MCF 10A (cell line): ENCODE measurements at regions of chr20 and their contacts with region 1.

Region 1: GRCh38 chr20:50504231-50504823 is 5.9 kb upstream of the PTPN1 start:
- DNase-seq: no peak
- H3K4me3 Mint-ChIP-seq: no peak overlapping the region
- H3K27ac Mint-ChIP-seq: peak overlapping the region; percentile 88
- H3K4me1 Mint-ChIP-seq: peaks cover 27% of the 10 kb centered on the region
- H3K27me3 Mint-ChIP-seq: no peaks in the 10 kb centered on the region
- CTCF ChIP-seq: no peak

Region 2: DNA sequence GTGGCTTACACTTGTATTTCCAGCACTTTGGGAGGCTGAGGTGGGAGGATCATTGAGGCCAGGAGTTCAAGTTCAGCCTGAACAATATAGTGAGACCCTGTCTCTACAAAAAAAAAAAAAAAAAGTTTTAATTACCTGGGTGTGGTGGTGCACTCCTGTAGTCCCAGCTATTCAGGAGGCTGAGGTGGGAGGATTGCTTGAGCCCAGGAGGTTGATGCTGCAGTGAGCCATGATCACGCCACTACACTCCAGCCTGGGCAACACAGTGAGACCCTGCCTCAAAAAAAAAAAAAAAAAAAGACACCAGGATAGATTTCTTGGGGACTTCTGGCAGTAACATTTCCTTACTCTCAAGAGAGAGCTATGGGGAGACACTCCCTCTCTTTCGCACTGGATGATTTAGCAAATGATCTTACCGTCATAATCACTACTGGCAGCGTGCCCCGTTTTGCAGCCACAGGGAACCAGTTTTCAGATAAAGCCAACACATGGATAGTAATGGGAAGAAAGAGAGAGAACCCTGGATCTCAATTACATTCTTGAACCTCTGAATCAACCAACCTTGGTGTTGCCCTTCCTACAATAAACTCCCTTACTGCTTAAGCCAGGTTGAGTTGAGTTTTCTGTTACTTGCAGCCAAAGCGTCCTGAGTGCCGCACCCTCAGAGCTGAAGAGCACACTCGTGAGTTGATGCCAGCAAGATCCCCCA is 12.2 kb before region 1 on chr20:
- CTCF ChIA-PET with region 1: interaction called, 6 read pairs
- POLR2A ChIA-PET with region 1: interaction called, 480 read pairs
- intact Hi-C with region 1: no loop called
- DNase-seq: peak; percentile 92
- H3K4me3 Mint-ChIP-seq: peak overlapping the region; percentile 60
- H3K27ac Mint-ChIP-seq: peak overlapping the region; percentile 92
- H3K4me1 Mint-ChIP-seq: peaks cover 39% of the 10 kb centered on the region
- H3K27me3 Mint-ChIP-seq: no peaks in the 10 kb centered on the region
- CTCF ChIP-seq: no peak

Region 3: GRCh38 chr20:50645253-50646118 is 141.2 kb after region 1 on chr20:
- CTCF ChIA-PET with region 1: no interaction called
- POLR2A ChIA-PET with region 1: no interaction called
- intact Hi-C with region 1: no loop called
- DNase-seq: peak; percentile 93
- H3K4me3 Mint-ChIP-seq: peak overlapping the region; percentile 52
- H3K27ac Mint-ChIP-seq: peak overlapping the region; percentile 93
- H3K4me1 Mint-ChIP-seq: peaks cover 14% of the 10 kb centered on the region
- H3K27me3 Mint-ChIP-seq: no peaks in the 10 kb centered on the region
- CTCF ChIP-seq: no peak